ENCODE measurements at regions of chr11 and their contacts with region 1.

Region 1: GRCh38 chr11:77421041-77421723 is 52.7 kb downstream of the PAK1 start:
- DNase-seq: peak in 1 of 4 experiments; percentile 20
- ATAC-seq: peak; percentile 49; the same call in 2 of the 3 replicates
- H3K4me3 ChIP-seq: no peak overlapping the region
- H3K27ac ChIP-seq: no peak overlapping the region
- H3K4me1 ChIP-seq: peaks cover 0 to 4% of the 10 kb centered on the region in 2 experiments; a peak in 2 of 5 replicates
- H3K27me3 ChIP-seq: peaks cover 0 to 2% of the 10 kb centered on the region in 2 experiments; a peak in 2 of 5 replicates
- CTCF ChIP-seq: no peak
- EP300 ChIP-seq: no peak
- POLR2A ChIP-seq: no peak
- RAD21 ChIP-seq: no peak

Region 2: DNA sequence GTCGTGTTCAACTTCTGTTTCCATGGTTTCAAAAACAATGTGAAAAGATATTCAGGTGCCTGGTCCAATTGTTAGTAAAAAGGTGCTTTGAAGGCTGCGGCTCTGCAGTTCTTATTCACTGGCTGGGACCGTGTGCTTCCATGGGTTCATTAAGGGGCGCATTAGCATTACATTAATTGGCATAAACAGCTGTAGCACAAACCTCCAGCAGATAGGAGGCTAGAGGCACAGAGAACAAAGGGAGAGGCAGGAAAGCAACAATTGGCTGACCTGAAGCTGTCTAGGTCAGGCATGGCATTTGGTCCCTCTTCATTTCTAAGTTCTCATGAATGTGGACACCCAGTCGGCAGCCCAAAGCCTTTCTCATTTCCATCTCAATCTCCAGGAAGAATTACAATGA is 36.2 kb after region 1 on chr11:
- CTCF ChIA-PET with region 1: no interaction called
- POLR2A ChIA-PET with region 1: interaction called, 5 read pairs
- in situ Hi-C with region 1: no loop called
- intact Hi-C with region 1: loop called (anchors 5 kb)
- DNase-seq: no peak
- ATAC-seq: no peak
- H3K4me3 ChIP-seq: no peak overlapping the region
- H3K27ac ChIP-seq: no peak overlapping the region
- H3K4me1 ChIP-seq: peaks cover 0 to 4% of the 10 kb centered on the region in 2 experiments; a peak in 1 of 5 replicates
- H3K27me3 ChIP-seq: peaks cover 14 to 18% of the 10 kb centered on the region in 2 experiments; a peak in 3 of 5 replicates
- CTCF ChIP-seq: no peak
- EP300 ChIP-seq: no peak
- POLR2A ChIP-seq: no peak
- RAD21 ChIP-seq: no peak

Measured in K562 (cell line).